ENCODE measurements at regions of chr11 and their contacts with region 1.

Region 1: GRCh38 chr11:35617687-35618496 is at the start of gene FJX1:
- DNase-seq: peak; percentile 83
- total RNA-seq, gene FJX1: 3.6 TPM

Region 2: DNA sequence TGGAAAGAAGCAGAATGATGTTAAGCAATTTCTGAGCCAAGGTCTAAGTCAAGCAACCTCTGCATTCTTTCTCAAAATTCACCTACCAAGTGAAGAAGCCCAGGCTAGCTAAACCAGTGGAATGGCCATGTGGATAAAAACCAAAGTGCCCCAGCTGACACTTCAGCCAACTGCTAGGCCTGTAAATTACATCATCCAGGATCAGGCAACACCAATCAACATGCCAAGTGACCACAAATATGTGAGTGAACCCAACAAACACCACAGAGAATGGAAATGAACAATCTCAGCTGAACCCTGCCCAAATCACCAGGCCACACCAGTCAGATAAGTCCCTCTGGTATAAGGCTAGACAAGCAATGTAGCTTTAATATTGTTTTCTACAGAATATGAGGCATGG is 24.7 kb before region 1 on chr11:
- intact Hi-C with region 1: no loop called
- DNase-seq: no peak

Region 3: GRCh38 chr11:35662649-35663407 is 44.9 kb after region 1 on chr11 and contains the start of gene TRIM44:
- intact Hi-C with region 1: loop called (anchors 2 kb)
- DNase-seq: peak; percentile 91
- total RNA-seq, gene TRIM44: 57.8 TPM

Region 4: DNA sequence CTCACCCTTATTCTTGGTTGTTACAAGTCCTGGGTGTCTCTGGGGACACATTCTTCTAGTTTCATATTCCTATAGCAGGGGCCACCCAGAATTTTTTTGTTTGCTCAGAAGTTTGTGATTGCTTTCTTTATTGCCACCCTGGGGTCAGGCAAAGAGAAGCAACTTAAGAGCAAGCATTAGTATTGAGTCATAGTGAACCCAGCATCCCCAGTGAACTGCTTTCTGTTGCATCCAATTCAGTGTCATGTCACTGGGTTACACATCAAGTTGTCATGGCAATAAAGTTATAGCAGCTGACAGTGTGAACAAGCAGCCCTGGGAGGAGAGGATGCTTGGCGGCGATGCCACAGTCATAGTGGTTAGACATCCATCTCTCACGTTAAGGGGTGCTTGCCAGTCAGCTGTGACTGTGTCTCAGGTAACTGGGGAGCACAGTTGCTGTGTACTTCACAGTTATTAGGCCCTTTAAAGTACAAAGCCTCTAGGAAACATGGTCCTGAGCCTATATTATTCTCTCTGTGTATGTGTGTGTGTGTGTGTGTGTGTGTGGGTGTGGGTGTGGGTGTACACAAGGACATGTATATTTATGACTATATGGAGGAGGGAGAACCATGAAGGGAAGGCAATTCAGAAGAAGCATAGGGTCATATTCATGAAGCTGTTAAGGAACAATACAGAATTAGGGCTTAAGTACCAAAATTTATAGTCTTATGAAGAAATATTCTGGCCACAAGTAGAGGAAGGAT is 97.2 kb after region 1 on chr11:
- intact Hi-C with region 1: no loop called
- DNase-seq: no peak

Region 5: GRCh38 chr11:35822815-35823495 is 205.1 kb after region 1 on chr11:
- intact Hi-C with region 1: loop called (anchors 5 kb)
- DNase-seq: no peak

Region 6: DNA sequence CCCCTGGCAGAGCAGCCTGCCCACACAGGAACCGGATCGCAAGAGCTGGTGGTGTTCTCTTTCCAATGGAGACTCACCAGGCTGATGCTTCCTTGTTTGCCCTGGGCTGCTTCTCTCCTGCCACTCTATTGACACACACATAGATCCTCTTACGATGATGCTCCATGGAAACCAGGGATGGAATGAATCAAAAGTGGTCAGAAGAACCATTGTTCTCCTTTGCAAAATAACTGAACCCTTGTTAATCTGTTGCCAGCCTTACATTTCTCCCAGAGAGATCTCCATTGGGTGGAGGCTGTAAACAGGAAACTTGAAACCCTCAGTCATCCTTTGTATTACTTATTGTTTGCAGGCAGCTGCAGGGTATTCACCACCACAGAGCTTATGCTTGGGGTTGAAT is 301.4 kb after region 1 on chr11:
- intact Hi-C with region 1: no loop called
- DNase-seq: no peak

Region 7: DNA sequence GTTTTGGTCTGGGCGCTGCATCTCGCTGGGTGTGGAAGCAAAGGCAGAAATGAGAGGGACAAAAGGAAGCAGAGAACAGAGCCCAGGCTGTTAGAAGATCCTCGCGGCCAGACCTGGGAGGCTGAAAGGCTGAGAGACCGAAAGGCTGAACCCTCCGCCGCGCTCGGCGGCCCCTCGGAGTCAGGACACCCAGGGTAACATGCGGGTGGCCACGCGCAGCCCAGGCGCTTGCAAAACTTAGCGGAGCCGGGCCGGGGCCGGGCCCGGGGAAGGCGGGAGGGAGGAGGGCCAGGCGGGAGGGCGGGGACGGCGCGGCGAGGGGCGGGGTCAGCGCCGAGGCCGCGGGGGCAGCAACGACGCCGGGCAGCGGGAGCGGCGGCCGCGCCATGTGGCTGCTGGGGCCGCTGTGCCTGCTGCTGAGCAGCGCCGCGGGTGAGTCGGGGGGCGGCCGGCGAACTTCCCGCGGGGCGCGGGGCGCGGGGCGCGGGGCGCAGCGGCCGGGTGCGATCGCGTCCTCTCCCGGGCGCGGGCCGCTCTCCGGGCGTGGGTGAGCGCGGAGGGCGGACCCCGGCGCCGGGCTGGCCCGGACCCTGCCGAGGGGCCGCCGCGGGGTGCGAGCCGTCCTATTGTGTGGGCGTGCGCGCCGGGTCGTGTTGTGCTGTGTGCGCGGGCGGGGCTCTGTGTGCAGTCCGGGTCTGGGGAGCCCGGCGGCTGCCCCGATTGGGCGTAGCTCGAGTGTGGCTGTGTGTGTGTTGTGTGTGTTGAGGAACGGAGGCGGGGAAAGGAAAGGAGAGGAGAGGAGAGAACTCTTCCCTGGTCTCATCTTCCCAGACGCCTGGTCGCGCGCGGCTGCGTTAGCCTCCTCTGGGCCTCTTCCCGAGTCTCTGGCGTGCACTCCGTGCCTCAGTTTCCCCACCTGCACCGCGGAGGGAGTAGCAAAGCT is 326.1 kb after region 1 on chr11 and contains the start of gene LDLRAD3:
- intact Hi-C with region 1: loop called (anchors 10 kb)
- DNase-seq: peak; percentile 90
- total RNA-seq, gene LDLRAD3: 4.4 TPM

Region 8: GRCh38 chr11:36056160-36056751 is 438.4 kb after region 1 on chr11:
- intact Hi-C with region 1: loop called (anchors 10 kb)
- DNase-seq: no peak

Region 9: GRCh38 chr11:36131721-36132397 is 514.0 kb after region 1 on chr11:
- intact Hi-C with region 1: loop called (anchors 2 kb)
- DNase-seq: no peak

Region 10: GRCh38 chr11:36258730-36259360 is 641.0 kb after region 1 on chr11:
- intact Hi-C with region 1: loop called (anchors 5 kb)
- DNase-seq: no peak